ENCODE measurements at regions of chr5 and their contacts with region 1.

Region 1: DNA sequence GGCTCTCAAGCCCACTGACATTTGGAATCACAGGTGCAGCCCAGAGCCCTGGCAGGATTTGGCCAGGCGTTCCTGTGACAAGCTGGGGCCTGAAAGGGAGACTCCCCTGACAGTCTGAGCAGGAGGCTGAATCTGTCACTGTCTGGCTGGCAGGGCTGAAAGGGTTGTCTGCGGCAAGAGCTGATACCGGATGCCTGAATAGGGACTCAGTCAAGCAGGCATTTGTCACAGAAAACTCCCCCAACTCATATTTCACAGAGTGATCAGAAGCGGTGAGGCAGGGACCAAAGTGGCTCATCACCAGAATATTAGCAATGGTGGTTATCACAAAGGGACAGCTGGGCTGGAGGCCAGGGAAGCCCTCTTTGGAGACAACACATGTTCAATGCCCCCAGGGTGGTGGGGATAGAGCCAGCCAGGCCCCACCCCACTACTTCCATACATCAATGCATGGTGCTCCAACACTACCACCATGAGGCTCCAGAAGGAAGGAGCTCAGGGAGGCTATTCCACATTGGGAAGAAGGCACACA is 295.5 kb downstream of the DTWD2 start:
- DNase-seq: no peak
- H3K4me3 Mint-ChIP-seq: no peak overlapping the region
- H3K27ac Mint-ChIP-seq: no peak overlapping the region
- H3K4me1 Mint-ChIP-seq: no peaks in the 10 kb centered on the region
- H3K27me3 Mint-ChIP-seq: no peaks in the 10 kb centered on the region

Region 2: GRCh38 chr5:118224546-118224945 is 468.3 kb before region 1 on chr5:
- CTCF ChIA-PET with region 1: no interaction called
- intact Hi-C with region 1: loop called (anchors 10 kb)
- DNase-seq: no peak
- H3K4me3 Mint-ChIP-seq: no peak overlapping the region
- H3K27ac Mint-ChIP-seq: no peak overlapping the region
- H3K4me1 Mint-ChIP-seq: no peaks in the 10 kb centered on the region
- H3K27me3 Mint-ChIP-seq: no peaks in the 10 kb centered on the region

Region 3: GRCh38 chr5:119355685-119356611 is 663.1 kb after region 1 on chr5 and contains the start of gene TNFAIP8:
- CTCF ChIA-PET with region 1: no interaction called
- intact Hi-C with region 1: no loop called
- DNase-seq: peak; percentile 91
- H3K4me3 Mint-ChIP-seq: peak within 1 kb of the TSS; percentile 98
- H3K27ac Mint-ChIP-seq: peak within 1 kb of the TSS; percentile 98
- H3K4me1 Mint-ChIP-seq: peaks cover 67% of the 10 kb centered on the region
- H3K27me3 Mint-ChIP-seq: no peaks in the 10 kb centered on the region
- total RNA-seq, gene TNFAIP8: 141 to 142 TPM

Measured in activated naive CD4-positive, alpha-beta T cell treated with anti-CD3 and anti-CD28 coated beads for 36 hours (primary cell).